GM12878 (cell line): ENCODE measurements at regions of chr4 and their contacts with region 1.

Region 1: GRCh38 chr4:53688186-53688790 is 97.0 kb upstream of the LNX1 start:
- DNase-seq: peak; percentile 76
- ATAC-seq: peak; percentile 88
- H3K4me3 ChIP-seq: no peak overlapping the region
- H3K27ac ChIP-seq: peak overlapping the region; percentile 1; the same call in 1 of the 2 replicates
- H3K4me1 ChIP-seq: peaks cover 4% of the 10 kb centered on the region; the same call in 1 of the 2 replicates
- H3K27me3 ChIP-seq: no peaks in the 10 kb centered on the region
- CTCF ChIP-seq: no peak
- EP300 ChIP-seq: peak in 1 of 2 experiments; percentile 49; a peak in 1 of 4 replicates
- POLR2A ChIP-seq: no peak
- RAD21 ChIP-seq: no peak

Region 2: GRCh38 chr4:53531585-53532224 is 156.6 kb before region 1 on chr4:
- CTCF ChIA-PET with region 1: no interaction called
- POLR2A ChIA-PET with region 1: no interaction called
- RAD21 ChIA-PET with region 1: no interaction called
- SMC1A ChIA-PET with region 1: no interaction called
- in situ Hi-C with region 1: no loop called
- intact Hi-C with region 1: no loop called
- DNase-seq: no peak
- ATAC-seq: no peak
- H3K4me3 ChIP-seq: no peak overlapping the region
- H3K27ac ChIP-seq: no peak overlapping the region
- H3K4me1 ChIP-seq: no peaks in the 10 kb centered on the region
- H3K27me3 ChIP-seq: no peaks in the 10 kb centered on the region
- CTCF ChIP-seq: no peak
- EP300 ChIP-seq: no peak
- POLR2A ChIP-seq: no peak
- RAD21 ChIP-seq: no peak

Region 3: DNA sequence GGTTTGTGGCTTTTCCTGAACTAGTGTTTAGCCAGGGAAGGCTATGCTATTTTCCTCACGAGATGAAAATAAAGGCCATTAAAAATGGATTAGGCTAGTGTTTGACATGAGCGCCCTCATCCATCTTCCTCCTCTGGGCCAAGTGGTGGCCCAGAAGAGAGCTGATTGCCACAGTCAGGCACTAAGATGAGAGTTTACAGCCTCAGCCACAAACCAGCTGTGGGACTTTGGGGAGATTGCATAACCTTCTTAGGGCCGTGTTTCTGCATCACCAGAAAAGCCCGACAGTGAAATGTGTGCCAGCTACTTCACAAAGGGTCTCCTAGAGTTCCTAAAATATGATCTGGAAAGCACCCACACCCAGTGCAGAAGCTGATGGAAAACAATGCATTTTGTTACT is 54.7 kb before region 1 on chr4:
- CTCF ChIA-PET with region 1: no interaction called
- POLR2A ChIA-PET with region 1: no interaction called
- RAD21 ChIA-PET with region 1: no interaction called
- SMC1A ChIA-PET with region 1: no interaction called
- in situ Hi-C with region 1: no loop called
- intact Hi-C with region 1: no loop called
- DNase-seq: no peak
- ATAC-seq: peak; percentile 22; the same call in 2 of the 3 replicates
- H3K4me3 ChIP-seq: no peak overlapping the region
- H3K27ac ChIP-seq: no peak overlapping the region
- H3K4me1 ChIP-seq: no peaks in the 10 kb centered on the region
- H3K27me3 ChIP-seq: no peaks in the 10 kb centered on the region
- CTCF ChIP-seq: no peak
- EP300 ChIP-seq: no peak
- POLR2A ChIP-seq: no peak
- RAD21 ChIP-seq: no peak

Region 4: GRCh38 chr4:53730031-53730805 is 41.9 kb after region 1 on chr4:
- CTCF ChIA-PET with region 1: no interaction called
- POLR2A ChIA-PET with region 1: no interaction called
- RAD21 ChIA-PET with region 1: no interaction called
- SMC1A ChIA-PET with region 1: no interaction called
- in situ Hi-C with region 1: no loop called
- intact Hi-C with region 1: no loop called
- DNase-seq: no peak
- ATAC-seq: no peak
- H3K4me3 ChIP-seq: no peak overlapping the region
- H3K27ac ChIP-seq: no peak overlapping the region
- H3K4me1 ChIP-seq: no peaks in the 10 kb centered on the region
- H3K27me3 ChIP-seq: no peaks in the 10 kb centered on the region
- CTCF ChIP-seq: no peak
- EP300 ChIP-seq: no peak
- POLR2A ChIP-seq: no peak
- RAD21 ChIP-seq: no peak

Region 5: GRCh38 chr4:53748328-53748772 is 60.1 kb after region 1 on chr4:
- CTCF ChIA-PET with region 1: no interaction called
- POLR2A ChIA-PET with region 1: no interaction called
- RAD21 ChIA-PET with region 1: interaction called, 10 read pairs
- SMC1A ChIA-PET with region 1: interaction called, 3 read pairs
- in situ Hi-C with region 1: no loop called
- intact Hi-C with region 1: no loop called
- DNase-seq: peak; percentile 96
- ATAC-seq: peak; percentile 99
- H3K4me3 ChIP-seq: no peak overlapping the region
- H3K27ac ChIP-seq: peak overlapping the region; percentile 71
- H3K4me1 ChIP-seq: peaks cover 29% of the 10 kb centered on the region
- H3K27me3 ChIP-seq: no peaks in the 10 kb centered on the region
- CTCF ChIP-seq: no peak
- EP300 ChIP-seq: peak; percentile 77 to 79; a peak in 3 of 4 replicates
- POLR2A ChIP-seq: no peak
- RAD21 ChIP-seq: peak; percentile 4; the same call in 1 of the 2 replicates